SK-N-SH (cell line): ENCODE measurements at regions of chr7 and their contacts with region 1.

Region 1: GRCh38 chr7:100852048-100852872 is at the start of gene SLC12A9:
- DNase-seq: peak; percentile 100
- H3K4me3 ChIP-seq: peak within 1 kb of the TSS; percentile 62 to 87
- H3K27ac ChIP-seq: peak within 1 kb of the TSS in 1 of 2 experiments; percentile 3; a peak in 1 of 4 replicates
- H3K4me1 ChIP-seq: peaks cover 7% of the 10 kb centered on the region in 2 experiments; a peak in 2 of 4 replicates
- H3K27me3 ChIP-seq: no peaks in the 10 kb centered on the region
- CTCF ChIP-seq: peak; percentile 99
- EP300 ChIP-seq: no peak; a peak in 1 of 4 replicates
- RAD21 ChIP-seq: peak; percentile 99
- polyA plus RNA-seq, gene SLC12A9: 29.7 and 31.0 TPM in 2 replicates

Region 2: DNA sequence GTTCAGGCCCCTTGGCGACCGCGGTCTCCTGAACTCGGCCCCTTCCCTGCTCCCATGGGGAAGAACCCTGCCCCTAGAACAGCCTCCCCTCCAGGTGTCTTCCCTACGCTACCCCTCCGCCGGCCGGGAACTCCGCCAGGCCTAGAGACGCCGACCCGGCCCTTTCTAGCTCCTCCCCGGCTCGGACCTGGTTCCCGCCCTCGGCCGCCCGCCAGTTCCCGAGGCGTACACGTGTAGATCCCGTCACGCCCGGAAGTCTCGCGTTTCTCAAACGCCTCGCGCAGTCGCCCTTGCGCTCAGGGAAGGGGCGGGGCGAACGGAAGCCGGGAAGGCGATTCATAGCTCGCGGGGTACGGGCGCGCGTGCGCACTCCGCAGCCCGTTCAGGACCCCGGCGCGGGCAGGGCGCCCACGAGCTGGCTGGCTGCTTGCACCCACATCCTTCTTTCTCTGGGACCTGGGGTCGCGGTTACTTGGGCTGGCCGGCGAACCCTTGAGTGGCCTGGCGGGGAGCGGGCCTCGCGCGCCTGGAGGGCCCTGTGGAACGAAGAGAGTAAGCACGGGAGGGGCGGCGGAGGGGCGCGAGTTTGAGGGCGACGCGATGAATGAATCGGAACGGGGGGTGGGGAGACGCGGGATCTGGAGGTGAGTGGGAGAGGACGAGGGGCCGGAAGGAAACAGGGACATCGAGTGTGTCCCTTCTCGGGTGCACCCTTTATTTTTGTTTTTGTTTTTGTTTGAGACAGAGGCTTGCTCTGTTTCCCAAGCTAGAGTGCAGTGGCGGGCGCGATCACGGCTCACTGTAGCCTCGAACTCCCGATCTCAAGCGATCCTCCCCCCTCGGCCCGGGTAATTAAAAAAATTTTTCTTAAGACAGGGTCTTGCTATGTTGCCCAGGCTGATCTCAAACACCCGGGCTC is 146.2 kb before region 1 on chr7 and contains the start of gene POP7:
- CTCF ChIA-PET with region 1: interaction called, 182 read pairs
- POLR2A ChIA-PET with region 1: interaction called, 24 read pairs
- DNase-seq: peak; percentile 99
- H3K4me3 ChIP-seq: peak within 1 kb of the TSS; percentile 62 to 92
- H3K27ac ChIP-seq: peak within 1 kb of the TSS; percentile 85 to 89
- H3K4me1 ChIP-seq: peaks cover 6 to 14% of the 10 kb centered on the region in 2 experiments; a peak in 2 of 4 replicates
- H3K27me3 ChIP-seq: peaks cover 3% of the 10 kb centered on the region; the same call in 1 of the 2 replicates
- CTCF ChIP-seq: no peak
- EP300 ChIP-seq: no peak
- RAD21 ChIP-seq: no peak
- polyA plus RNA-seq, gene POP7: 63.8 and 81.8 TPM in 2 replicates

Region 3: GRCh38 chr7:100764841-100765240 is 87.4 kb before region 1 on chr7:
- CTCF ChIA-PET with region 1: interaction called, 15 read pairs
- POLR2A ChIA-PET with region 1: no interaction called
- DNase-seq: peak; percentile 16
- H3K4me3 ChIP-seq: no peak overlapping the region
- H3K27ac ChIP-seq: no peak overlapping the region
- H3K4me1 ChIP-seq: no peaks in the 10 kb centered on the region
- H3K27me3 ChIP-seq: peaks cover 62% of the 10 kb centered on the region
- CTCF ChIP-seq: no peak
- EP300 ChIP-seq: no peak
- RAD21 ChIP-seq: no peak

Region 4: DNA sequence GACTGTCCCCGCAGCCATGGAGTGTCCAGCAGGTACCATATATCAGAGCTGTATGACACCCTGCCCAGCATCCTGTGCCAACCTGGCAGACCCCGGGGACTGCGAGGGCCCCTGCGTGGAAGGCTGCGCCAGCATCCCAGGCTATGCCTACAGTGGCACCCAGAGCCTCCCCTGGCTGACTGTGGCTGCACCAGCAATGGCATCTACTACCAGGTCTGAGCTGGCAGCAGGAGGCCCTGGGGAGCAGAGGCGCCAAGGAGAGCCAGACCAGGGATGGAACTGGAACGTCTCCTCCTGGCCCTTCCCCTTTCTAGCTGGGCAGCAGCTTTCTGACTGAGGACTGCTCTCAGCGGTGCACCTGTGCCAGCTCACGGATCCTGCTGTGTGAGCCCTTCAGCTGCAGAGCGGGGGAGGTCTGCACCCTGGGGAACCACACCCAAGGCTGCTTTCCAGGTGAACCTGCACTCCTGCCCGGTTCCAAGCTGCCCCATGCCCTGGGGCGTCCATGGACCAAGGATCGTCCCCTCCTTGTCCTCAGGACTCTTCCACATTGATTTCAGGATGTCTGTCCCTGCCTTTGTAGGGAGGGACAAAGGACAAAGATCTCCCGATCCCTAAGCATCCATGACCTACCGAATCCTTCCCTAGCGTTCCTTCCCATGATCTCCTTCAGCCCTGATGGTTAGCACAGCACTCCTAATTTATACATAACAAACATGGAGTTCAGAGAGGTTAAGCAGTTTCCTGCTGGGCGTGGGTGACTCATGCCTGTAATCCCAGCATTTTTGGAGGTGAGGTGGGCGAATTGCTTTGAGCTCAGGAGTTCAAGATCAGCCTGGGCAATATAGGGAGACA is 58.2 kb before region 1 on chr7:
- CTCF ChIA-PET with region 1: interaction called, 398 read pairs
- POLR2A ChIA-PET with region 1: interaction called, 30 read pairs
- DNase-seq: no peak
- H3K4me3 ChIP-seq: no peak overlapping the region
- H3K27ac ChIP-seq: no peak overlapping the region
- H3K4me1 ChIP-seq: no peaks in the 10 kb centered on the region
- H3K27me3 ChIP-seq: no peaks in the 10 kb centered on the region
- CTCF ChIP-seq: no peak
- EP300 ChIP-seq: no peak
- RAD21 ChIP-seq: no peak

Region 5: DNA sequence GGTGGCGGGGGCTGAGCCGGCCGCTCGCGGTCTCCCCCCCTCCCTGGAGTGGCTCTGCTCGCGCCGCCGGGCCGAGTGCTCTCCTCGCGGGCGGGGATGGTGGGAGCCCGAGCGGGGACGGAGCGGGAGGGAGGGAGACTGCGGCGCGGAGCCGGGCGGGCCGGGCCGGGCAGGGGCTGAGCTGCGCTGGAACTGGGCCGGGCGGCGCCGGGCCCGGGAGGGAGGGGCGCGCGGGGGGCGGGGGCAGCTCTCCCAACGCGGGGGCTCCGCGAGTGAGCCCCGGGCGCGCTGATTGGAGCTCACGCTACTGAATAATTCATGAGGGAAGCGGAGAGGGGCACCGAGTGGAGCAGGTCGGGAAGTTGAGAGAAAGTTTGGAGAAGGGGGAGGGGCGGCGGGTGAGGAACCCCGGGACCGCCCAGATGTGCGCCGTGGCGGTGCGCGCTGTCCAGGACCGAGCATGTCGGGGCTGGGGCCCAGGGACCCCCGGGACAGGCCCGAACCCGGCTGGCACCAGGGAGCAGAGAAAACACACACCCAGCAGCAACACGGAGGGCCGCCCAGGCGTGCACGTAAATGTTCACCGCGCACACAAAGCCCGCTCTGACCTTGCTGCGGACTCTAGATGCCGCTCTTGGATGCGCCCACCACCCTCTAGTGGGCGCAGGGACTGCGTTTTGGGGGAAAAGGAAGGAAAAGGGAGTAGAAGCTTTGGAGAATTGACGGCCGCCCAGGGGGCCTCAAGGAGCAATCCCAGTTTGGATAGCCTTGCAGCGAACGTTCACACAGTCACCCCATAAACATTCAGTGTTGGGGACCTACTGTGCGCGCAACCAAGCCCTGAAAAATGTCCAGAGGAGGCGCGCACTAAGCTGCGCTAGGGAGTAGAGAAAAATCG is 24.7 kb before region 1 on chr7 and contains the start of gene EPHB4:
- CTCF ChIA-PET with region 1: interaction called, 35 read pairs
- POLR2A ChIA-PET with region 1: interaction called, 6 read pairs
- DNase-seq: peak; percentile 88
- H3K4me3 ChIP-seq: peak within 1 kb of the TSS; percentile 65 to 78
- H3K27ac ChIP-seq: peak within 1 kb of the TSS; percentile 17 to 35
- H3K4me1 ChIP-seq: peaks cover 6 to 22% of the 10 kb centered on the region in 2 experiments; a peak in 2 of 4 replicates
- H3K27me3 ChIP-seq: no peaks in the 10 kb centered on the region
- CTCF ChIP-seq: peak; percentile 76
- EP300 ChIP-seq: no peak
- RAD21 ChIP-seq: peak; percentile 55
- polyA plus RNA-seq, gene EPHB4: 51.1 and 64.4 TPM in 2 replicates

Region 6: GRCh38 chr7:100874577-100875355 is 22.5 kb after region 1 on chr7 and contains the start of gene SRRT:
- CTCF ChIA-PET with region 1: interaction called, 37 read pairs
- POLR2A ChIA-PET with region 1: interaction called, 14 read pairs
- DNase-seq: peak; percentile 100
- H3K4me3 ChIP-seq: peak within 1 kb of the TSS; percentile 65 to 93
- H3K27ac ChIP-seq: peak within 1 kb of the TSS; percentile 92 to 95
- H3K4me1 ChIP-seq: peaks cover 13 to 23% of the 10 kb centered on the region in 2 experiments; a peak in 3 of 4 replicates
- H3K27me3 ChIP-seq: no peaks in the 10 kb centered on the region
- CTCF ChIP-seq: no peak
- EP300 ChIP-seq: peak; percentile 24 to 38; a peak in 2 of 4 replicates
- RAD21 ChIP-seq: no peak
- polyA plus RNA-seq, gene SRRT: 76.5 and 92.7 TPM in 2 replicates

Region 7: GRCh38 chr7:101235050-101235449 is 382.8 kb after region 1 on chr7:
- CTCF ChIA-PET with region 1: no interaction called
- POLR2A ChIA-PET with region 1: no interaction called
- DNase-seq: peak; percentile 71
- H3K4me3 ChIP-seq: no peak overlapping the region
- H3K27ac ChIP-seq: no peak overlapping the region
- H3K4me1 ChIP-seq: peaks cover 0 to 5% of the 10 kb centered on the region in 2 experiments; a peak in 1 of 4 replicates
- H3K27me3 ChIP-seq: no peaks in the 10 kb centered on the region
- CTCF ChIP-seq: peak; percentile 61
- EP300 ChIP-seq: no peak
- RAD21 ChIP-seq: peak; percentile 42